CD4-positive, alpha-beta memory T cell (primary cell): ENCODE measurements at regions of chr11 and their contacts with region 1.

Region 1: DNA sequence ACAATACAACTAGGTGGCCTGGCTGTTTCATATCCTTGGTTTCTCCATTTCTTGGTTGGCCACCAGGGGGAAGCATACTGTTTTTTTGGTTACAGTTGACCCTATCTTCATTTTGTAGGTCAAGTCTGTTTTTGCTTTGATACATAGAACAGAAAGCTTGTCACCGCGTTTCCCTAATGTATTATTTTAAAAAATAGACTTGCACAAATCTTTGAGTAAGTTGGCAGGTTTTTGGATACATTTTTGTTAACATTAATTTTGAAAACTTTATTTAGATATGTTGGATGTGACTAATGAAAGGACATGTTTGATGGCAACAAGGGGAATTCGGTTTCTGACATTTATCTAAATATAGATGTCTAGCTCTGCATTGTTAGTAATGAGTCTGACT is 3.0 kb downstream of the NCR3LG1 start:
- DNase-seq: peak; percentile 62 to 71 (median 65)
- H3K4me3 ChIP-seq: no peak overlapping the region
- H3K4me3 Mint-ChIP-seq: peak overlapping the region in 7 of 8 donors; percentile 74 to 98 (median 94)
- H3K27ac ChIP-seq: no peak overlapping the region
- H3K27ac Mint-ChIP-seq: peak overlapping the region in 5 of 7 donors; percentile 22 to 76 (median 64)
- H3K4me1 ChIP-seq: peaks cover 29% of the 10 kb centered on the region
- H3K4me1 Mint-ChIP-seq: peaks cover 17 to 44% (median 28%) of the 10 kb centered on the region in 4 donors
- H3K27me3 ChIP-seq: no peaks in the 10 kb centered on the region
- H3K27me3 Mint-ChIP-seq: peaks cover 0 to 1% of the 10 kb centered on the region in 2 donors

Region 2: GRCh38 chr11:17389211-17389956 is 34.8 kb after region 1 on chr11:
- CTCF ChIA-PET with region 1: interaction called, 21 read pairs
- POLR2A ChIA-PET with region 1: interaction called, 3 read pairs
- intact Hi-C with region 1: loop called (anchors 2 kb)
- DNase-seq: peak; percentile 76 to 82 (median 77)
- H3K4me3 ChIP-seq: peak overlapping the region; percentile 17 to 54
- H3K4me3 Mint-ChIP-seq: peak overlapping the region; percentile 77 to 90 (median 84)
- H3K27ac ChIP-seq: no peak overlapping the region
- H3K27ac Mint-ChIP-seq: peak overlapping the region in 6 of 7 donors; percentile 36 to 68 (median 39)
- H3K4me1 ChIP-seq: peaks cover 5% of the 10 kb centered on the region
- H3K4me1 Mint-ChIP-seq: peaks cover 0 to 8% (median 3%) of the 10 kb centered on the region in 4 donors
- H3K27me3 ChIP-seq: no peaks in the 10 kb centered on the region
- H3K27me3 Mint-ChIP-seq: peaks cover 0 to 2% of the 10 kb centered on the region in 2 donors